Esophagus muscularis mucosa (tissue), 4 donors: ENCODE measurements at regions of chr1 and their contacts with region 1.

Region 1: DNA sequence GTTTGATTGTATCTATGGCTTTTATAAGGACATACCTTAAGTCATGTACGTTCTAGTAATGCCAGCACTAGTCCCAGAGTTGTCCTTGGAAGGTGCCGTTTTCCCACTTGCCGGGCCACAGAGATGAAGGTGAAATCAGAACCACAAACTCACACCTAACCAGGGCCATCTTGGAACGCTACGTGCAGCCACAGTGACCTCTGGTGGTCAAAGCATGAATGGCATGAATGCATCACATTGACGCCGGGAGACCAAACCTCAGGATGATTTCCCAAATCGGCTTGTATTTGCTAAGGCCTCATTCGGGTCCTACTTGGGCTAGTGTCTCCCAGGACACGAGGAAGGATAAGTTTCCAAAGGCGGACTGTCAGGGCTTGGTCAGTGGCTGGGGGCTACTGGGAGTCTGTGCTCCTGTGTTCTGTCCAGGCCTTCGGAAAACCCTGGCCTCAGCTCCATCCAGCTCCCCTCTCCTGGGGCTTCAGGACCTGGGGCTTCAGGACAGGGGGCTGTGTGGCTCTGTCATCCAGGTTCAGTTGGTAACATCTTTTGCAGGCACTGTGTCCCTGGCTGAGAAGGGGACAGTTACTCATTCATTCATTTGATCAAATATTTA is 260.5 kb downstream of the PRDM2 start:
- DNase-seq: no peak
- H3K4me3 ChIP-seq: no peak overlapping the region
- H3K27ac ChIP-seq: no peak overlapping the region
- H3K4me1 ChIP-seq: no peaks in the 10 kb centered on the region
- H3K27me3 ChIP-seq: peaks cover 0 to 18% (median 0%) of the 10 kb centered on the region in 4 donors
- CTCF ChIP-seq: peak in 2 of 3 experiments; percentile 93 to 97
- EP300 ChIP-seq: no peak
- POLR2A ChIP-seq: no peak

Region 2: GRCh38 chr1:13662493-13662892 is 298.0 kb before region 1 on chr1:
- intact Hi-C with region 1: loop called (anchors 1 kb)
- DNase-seq: no peak
- H3K4me3 ChIP-seq: no peak overlapping the region
- H3K27ac ChIP-seq: peak overlapping the region in 2 of 4 donors; percentile 38 to 41
- H3K4me1 ChIP-seq: peaks cover 0 to 9% (median 5%) of the 10 kb centered on the region in 4 donors
- H3K27me3 ChIP-seq: peaks cover 0 to 13% (median 0%) of the 10 kb centered on the region in 4 donors
- CTCF ChIP-seq: no peak
- EP300 ChIP-seq: no peak
- POLR2A ChIP-seq: no peak

Region 3: DNA sequence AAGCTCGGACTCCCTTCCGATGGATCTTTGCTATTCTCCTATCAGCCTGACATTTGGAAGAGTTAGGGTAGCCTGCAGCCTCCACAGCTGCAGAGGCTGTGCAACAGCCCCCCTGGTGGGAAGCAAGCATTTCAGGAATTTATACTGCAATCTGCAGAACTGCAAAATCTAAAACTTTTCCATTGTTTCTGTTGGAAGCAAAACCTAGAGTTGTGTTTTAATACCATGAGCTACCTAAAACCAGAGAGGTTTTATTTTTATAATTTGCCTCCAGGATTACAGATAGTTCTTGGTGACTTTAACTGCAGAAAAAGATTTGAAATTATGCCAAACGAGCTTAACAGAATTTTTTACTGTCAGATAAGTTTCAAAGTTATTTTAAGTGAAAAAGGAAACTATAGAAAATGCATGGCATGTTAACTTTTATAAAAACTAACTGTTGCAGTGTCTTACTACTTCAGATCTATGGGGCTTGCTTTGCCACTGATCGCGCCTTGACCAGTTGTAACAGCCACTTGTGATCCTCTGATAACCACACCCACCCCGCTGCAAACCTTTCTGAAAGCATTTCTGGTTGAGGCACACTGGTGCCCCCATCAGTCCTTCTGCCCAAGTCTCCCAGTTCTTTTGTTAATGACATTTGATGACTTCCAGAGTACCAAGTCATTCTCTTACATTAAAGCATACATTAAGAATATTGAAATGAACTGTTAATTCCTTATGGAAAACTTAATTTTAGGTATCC is 195.7 kb before region 1 on chr1:
- intact Hi-C with region 1: no loop called
- DNase-seq: no peak
- H3K4me3 ChIP-seq: no peak overlapping the region
- H3K27ac ChIP-seq: no peak overlapping the region
- H3K4me1 ChIP-seq: peaks cover 41 to 77% (median 61%) of the 10 kb centered on the region in 4 donors
- H3K27me3 ChIP-seq: no peaks in the 10 kb centered on the region
- CTCF ChIP-seq: no peak
- EP300 ChIP-seq: no peak
- POLR2A ChIP-seq: no peak

Region 4: DNA sequence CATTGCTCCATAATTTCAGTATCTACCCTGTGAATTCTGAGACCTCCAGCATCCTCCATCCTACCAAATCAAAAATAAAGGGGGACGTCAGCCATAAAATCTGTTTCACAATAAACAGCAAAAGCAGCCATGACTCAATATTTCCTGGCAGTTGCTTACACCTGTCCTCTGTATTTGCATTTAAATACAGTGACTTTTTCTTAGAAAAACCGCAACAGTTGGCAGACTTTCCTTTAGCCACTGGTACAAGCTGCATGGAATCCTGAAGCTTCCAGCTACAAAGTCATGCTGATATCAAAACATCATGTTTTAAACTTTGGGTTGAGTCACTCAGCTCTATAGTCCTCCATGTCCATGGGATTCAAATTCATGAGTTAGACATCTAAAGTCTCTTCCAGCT is 360.0 kb after region 1 on chr1:
- intact Hi-C with region 1: no loop called
- DNase-seq: no peak
- H3K4me3 ChIP-seq: no peak overlapping the region
- H3K27ac ChIP-seq: no peak overlapping the region
- H3K4me1 ChIP-seq: no peaks in the 10 kb centered on the region
- H3K27me3 ChIP-seq: no peaks in the 10 kb centered on the region
- CTCF ChIP-seq: no peak
- EP300 ChIP-seq: no peak
- POLR2A ChIP-seq: no peak